ENCODE measurements at regions of chr12 and their contacts with region 1.

Region 1: GRCh38 chr12:84911331-84912197 is 1.0 kb downstream of the SLC6A15 start:
- DNase-seq: peak; percentile 56
- H3K4me3 Mint-ChIP-seq: peak overlapping the region; percentile 50
- H3K27ac Mint-ChIP-seq: no peak overlapping the region
- H3K4me1 Mint-ChIP-seq: peaks cover 6% of the 10 kb centered on the region
- H3K27me3 Mint-ChIP-seq: peaks cover 43% of the 10 kb centered on the region

Region 2: GRCh38 chr12:85279449-85280164 is 368.0 kb after region 1 on chr12:
- intact Hi-C with region 1: loop called (anchors 2 kb)
- DNase-seq: no peak
- H3K4me3 Mint-ChIP-seq: no peak overlapping the region
- H3K27ac Mint-ChIP-seq: no peak overlapping the region
- H3K4me1 Mint-ChIP-seq: peaks cover 10% of the 10 kb centered on the region
- H3K27me3 Mint-ChIP-seq: peaks cover 61% of the 10 kb centered on the region

Measured in activated CD4-positive, alpha-beta T cell treated with anti-CD3 and anti-CD28 coated beads, Interleukin-2, amount 10 ng/mL, durations not matched to agents 24 days and 14 days (primary cell).